GM10248 (cell line): ENCODE measurements at regions of chr1 and their contacts with region 1.

Region 1: GRCh38 chr1:41812051-41812450 is 106.7 kb downstream of the HIVEP3 start:
- DNase-seq: peak; percentile 71
- CTCF ChIP-seq: peak; percentile 55

Region 2: GRCh38 chr1:41789419-41790260 is 22.4 kb before region 1 on chr1:
- CTCF ChIA-PET with region 1: interaction called, 12 read pairs
- POLR2A ChIA-PET with region 1: no interaction called
- DNase-seq: no peak
- CTCF ChIP-seq: no peak

Region 3: GRCh38 chr1:41823471-41823870 is 11.4 kb after region 1 on chr1:
- CTCF ChIA-PET with region 1: interaction called, 31 read pairs
- POLR2A ChIA-PET with region 1: no interaction called
- DNase-seq: no peak
- CTCF ChIP-seq: no peak